ENCODE measurements at regions of chr16 and their contacts with region 1.

Region 1: DNA sequence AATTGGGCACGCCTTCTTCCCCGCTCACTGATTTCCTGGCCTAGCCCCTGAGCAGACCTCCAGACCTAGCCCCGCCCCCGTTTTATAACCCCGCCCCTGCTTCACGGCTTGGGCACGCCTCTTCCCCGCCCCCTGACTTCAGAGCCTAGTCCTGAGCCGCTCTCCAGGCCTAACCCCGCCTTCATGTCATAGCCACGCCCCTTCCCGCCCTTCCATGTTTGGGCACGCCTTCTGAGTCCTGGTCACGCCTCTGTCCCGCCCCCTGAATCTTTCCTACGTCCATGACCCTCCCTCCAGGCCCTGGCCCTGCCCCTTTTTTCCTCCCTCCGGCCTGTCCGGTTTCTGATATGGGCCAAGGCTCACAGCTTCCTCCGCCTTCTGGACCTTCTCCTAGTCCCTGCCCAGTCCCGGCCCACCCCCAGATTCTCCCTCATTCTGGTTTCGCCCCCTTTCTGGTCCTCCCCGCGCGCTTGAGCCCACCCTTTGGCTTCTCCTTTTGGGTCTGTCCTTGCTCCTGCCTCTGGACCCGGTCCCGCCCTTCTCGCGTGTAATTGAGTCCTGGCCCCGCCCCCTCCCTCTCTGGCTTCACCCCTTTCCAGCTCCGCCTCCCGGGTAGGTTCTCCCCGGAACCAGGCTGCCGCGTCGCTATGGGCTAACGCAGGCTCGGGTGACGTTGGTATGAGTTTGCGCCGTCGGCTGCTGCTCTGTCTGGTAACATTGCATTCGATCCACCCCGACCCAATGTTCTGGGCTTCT is 15.1 kb upstream of the EEF2K start:
- DNase-seq: peak; percentile 99
- H3K4me3 ChIP-seq: peak overlapping the region; percentile 69 to 73
- H3K4me3 Mint-ChIP-seq: peak overlapping the region; percentile 82 to 98 (median 94)
- H3K27ac ChIP-seq: peak overlapping the region; percentile 95
- H3K27ac Mint-ChIP-seq: peak overlapping the region; percentile 99 to 100 (median 100)
- H3K4me1 ChIP-seq: peaks cover 70% of the 10 kb centered on the region
- H3K4me1 Mint-ChIP-seq: peaks cover 47 to 82% (median 62%) of the 10 kb centered on the region in 4 donors
- H3K27me3 ChIP-seq: no peaks in the 10 kb centered on the region
- H3K27me3 Mint-ChIP-seq: peaks cover 2 to 5% of the 10 kb centered on the region in 2 donors

Region 2: GRCh38 chr16:21599233-21600030 is 591.5 kb before region 1 on chr16 and contains the start of gene METTL9:
- CTCF ChIA-PET with region 1: no interaction called
- POLR2A ChIA-PET with region 1: interaction called, 3 read pairs
- intact Hi-C with region 1: loop called (anchors 5 kb)
- DNase-seq: peak; percentile 94 to 96 (median 94)
- H3K4me3 ChIP-seq: peak within 1 kb of the TSS; percentile 65 to 80
- H3K4me3 Mint-ChIP-seq: peak within 1 kb of the TSS; percentile 90 to 97 (median 92)
- H3K27ac ChIP-seq: peak within 1 kb of the TSS; percentile 87
- H3K27ac Mint-ChIP-seq: peak within 1 kb of the TSS; percentile 82 to 99 (median 95)
- H3K4me1 ChIP-seq: peaks cover 57% of the 10 kb centered on the region
- H3K4me1 Mint-ChIP-seq: peaks cover 27 to 66% (median 49%) of the 10 kb centered on the region in 4 donors
- H3K27me3 ChIP-seq: no peaks in the 10 kb centered on the region
- H3K27me3 Mint-ChIP-seq: no peaks in the 10 kb centered on the region
- total RNA-seq, gene METTL9: 71.1 to 92.8 TPM

Region 3: GRCh38 chr16:21989133-21989532 is 201.8 kb before region 1 on chr16:
- CTCF ChIA-PET with region 1: interaction called, 20 read pairs
- POLR2A ChIA-PET with region 1: interaction called, 13 read pairs
- intact Hi-C with region 1: no loop called
- DNase-seq: no peak
- H3K4me3 ChIP-seq: no peak overlapping the region
- H3K4me3 Mint-ChIP-seq: no peak overlapping the region
- H3K27ac ChIP-seq: no peak overlapping the region
- H3K27ac Mint-ChIP-seq: peak overlapping the region in 1 of 7 donors; percentile 62
- H3K4me1 ChIP-seq: peaks cover 24% of the 10 kb centered on the region
- H3K4me1 Mint-ChIP-seq: peaks cover 19 to 39% (median 27%) of the 10 kb centered on the region in 4 donors
- H3K27me3 ChIP-seq: no peaks in the 10 kb centered on the region
- H3K27me3 Mint-ChIP-seq: no peaks in the 10 kb centered on the region

Region 4: DNA sequence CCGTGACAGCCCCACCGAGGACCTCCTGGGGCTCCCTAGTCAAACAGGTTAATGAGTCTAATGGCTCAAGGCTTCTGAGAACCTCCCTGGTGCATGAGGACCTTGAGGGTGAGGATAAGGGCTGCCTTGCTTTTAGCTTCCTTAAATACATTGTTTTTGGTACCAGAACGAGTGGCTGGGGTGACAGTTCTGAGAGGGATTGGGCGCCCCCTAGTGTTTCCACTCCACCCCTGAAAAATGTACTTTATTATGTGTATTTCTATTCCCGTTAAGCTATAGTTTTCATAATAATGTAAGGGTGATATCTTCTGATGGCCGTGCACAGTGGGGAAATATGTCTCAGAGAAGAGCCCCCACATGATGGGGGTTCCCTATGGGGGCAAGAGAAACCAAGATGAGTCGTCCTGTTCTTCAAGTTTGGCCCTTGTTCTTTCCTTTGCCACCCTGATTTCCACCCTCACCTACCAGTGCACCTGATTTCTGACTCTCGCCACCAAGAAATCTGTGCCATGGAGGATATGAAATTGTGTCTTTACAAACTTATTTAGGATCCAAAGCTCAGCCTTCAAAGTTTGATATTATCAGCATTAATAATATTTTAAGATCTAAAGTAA is 113.1 kb before region 1 on chr16:
- CTCF ChIA-PET with region 1: interaction called, 41 read pairs
- POLR2A ChIA-PET with region 1: interaction called, 14 read pairs
- intact Hi-C with region 1: loop called (anchors 1 kb)
- DNase-seq: peak; percentile 61 to 69 (median 67)
- H3K4me3 ChIP-seq: no peak overlapping the region
- H3K4me3 Mint-ChIP-seq: no peak overlapping the region
- H3K27ac ChIP-seq: no peak overlapping the region
- H3K27ac Mint-ChIP-seq: no peak overlapping the region
- H3K4me1 ChIP-seq: no peaks in the 10 kb centered on the region
- H3K4me1 Mint-ChIP-seq: peaks cover 0 to 5% (median 1%) of the 10 kb centered on the region in 4 donors
- H3K27me3 ChIP-seq: no peaks in the 10 kb centered on the region
- H3K27me3 Mint-ChIP-seq: no peaks in the 10 kb centered on the region

Region 5: GRCh38 chr16:22206013-22206841 is 15.3 kb after region 1 on chr16 and contains the start of gene EEF2K:
- CTCF ChIA-PET with region 1: interaction called, 42 read pairs
- POLR2A ChIA-PET with region 1: interaction called, 106 read pairs
- intact Hi-C with region 1: loop called (anchors 1 kb)
- DNase-seq: peak; percentile 64 to 80 (median 74)
- H3K4me3 ChIP-seq: peak within 1 kb of the TSS; percentile 76 to 78
- H3K4me3 Mint-ChIP-seq: peak within 1 kb of the TSS; percentile 91 to 97 (median 93)
- H3K27ac ChIP-seq: peak within 1 kb of the TSS; percentile 68
- H3K27ac Mint-ChIP-seq: peak within 1 kb of the TSS; percentile 81 to 95 (median 89)
- H3K4me1 ChIP-seq: peaks cover 14% of the 10 kb centered on the region
- H3K4me1 Mint-ChIP-seq: peaks cover 16 to 33% (median 25%) of the 10 kb centered on the region in 4 donors
- H3K27me3 ChIP-seq: no peaks in the 10 kb centered on the region
- H3K27me3 Mint-ChIP-seq: no peaks in the 10 kb centered on the region
- total RNA-seq, gene EEF2K: 19.1 to 20.7 TPM

Region 6: GRCh38 chr16:22232277-22233042 is 41.5 kb after region 1 on chr16:
- CTCF ChIA-PET with region 1: no interaction called
- POLR2A ChIA-PET with region 1: no interaction called
- intact Hi-C with region 1: no loop called
- DNase-seq: no peak
- H3K4me3 ChIP-seq: no peak overlapping the region
- H3K4me3 Mint-ChIP-seq: no peak overlapping the region
- H3K27ac ChIP-seq: no peak overlapping the region
- H3K27ac Mint-ChIP-seq: peak overlapping the region in 3 of 7 donors; percentile 10 to 41 (median 24)
- H3K4me1 ChIP-seq: no peaks in the 10 kb centered on the region
- H3K4me1 Mint-ChIP-seq: peaks cover 0 to 3% (median under 1%) of the 10 kb centered on the region in 4 donors
- H3K27me3 ChIP-seq: no peaks in the 10 kb centered on the region
- H3K27me3 Mint-ChIP-seq: no peaks in the 10 kb centered on the region

Region 7: GRCh38 chr16:22374311-22375116 is 183.6 kb after region 1 on chr16 and contains the start of gene CDR2:
- CTCF ChIA-PET with region 1: no interaction called
- POLR2A ChIA-PET with region 1: interaction called, 13 read pairs
- intact Hi-C with region 1: loop called (anchors 2 kb)
- DNase-seq: peak; percentile 98 to 99 (median 98)
- H3K4me3 ChIP-seq: peak within 1 kb of the TSS; percentile 86 to 87
- H3K4me3 Mint-ChIP-seq: peak within 1 kb of the TSS; percentile 94 to 99 (median 98)
- H3K27ac ChIP-seq: peak within 1 kb of the TSS; percentile 78
- H3K27ac Mint-ChIP-seq: peak within 1 kb of the TSS; percentile 91 to 97 (median 94)
- H3K4me1 ChIP-seq: peaks cover 41% of the 10 kb centered on the region
- H3K4me1 Mint-ChIP-seq: peaks cover 25 to 56% (median 39%) of the 10 kb centered on the region in 4 donors
- H3K27me3 ChIP-seq: no peaks in the 10 kb centered on the region
- H3K27me3 Mint-ChIP-seq: no peaks in the 10 kb centered on the region
- total RNA-seq, gene CDR2: 94.2 to 99.3 TPM

Measured in CD4-positive, alpha-beta memory T cell (primary cell).